ENCODE measurements at regions of chr7 and their contacts with region 1.

Region 1: DNA sequence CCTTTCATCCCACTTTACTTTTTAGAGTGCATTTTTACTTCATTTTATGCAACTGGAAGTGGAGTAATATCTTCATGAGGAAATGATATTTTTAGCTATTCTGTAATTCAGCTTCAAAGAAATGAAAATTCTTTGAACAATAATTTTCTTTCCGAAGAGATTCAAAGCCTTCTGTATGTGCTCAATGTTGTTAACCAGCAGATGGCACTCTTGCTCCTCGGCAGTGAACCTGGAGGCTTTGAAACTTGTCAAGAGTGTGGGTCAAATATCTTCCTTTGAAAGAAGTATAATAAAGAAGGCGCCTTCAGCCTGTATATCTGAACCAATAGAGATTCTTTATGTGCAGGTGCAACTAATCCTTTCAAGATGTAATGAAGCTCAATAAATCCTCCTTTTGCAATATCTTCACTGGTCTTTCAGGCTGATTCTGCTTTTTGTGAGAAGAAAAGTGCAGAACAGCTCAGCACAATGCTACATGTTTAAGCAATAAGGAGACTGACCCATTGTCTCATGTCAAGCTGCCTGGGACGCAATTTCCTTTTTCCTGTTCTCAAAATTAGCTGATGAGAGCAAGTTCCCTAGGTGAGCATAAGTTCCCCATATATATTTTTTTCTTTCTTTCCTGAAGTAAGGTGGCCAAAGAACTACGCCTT is 258.4 kb downstream of the SEMA3A start:
- DNase-seq: peak; percentile 57
- H3K4me3 ChIP-seq: no peak overlapping the region
- H3K27ac ChIP-seq: no peak overlapping the region
- H3K4me1 ChIP-seq: no peaks in the 10 kb centered on the region
- H3K27me3 ChIP-seq: no peaks in the 10 kb centered on the region
- CTCF ChIP-seq: peak; percentile 100
- EP300 ChIP-seq: no peak
- RAD21 ChIP-seq: peak; percentile 99

Region 2: GRCh38 chr7:83947260-83947659 is 11.1 kb after region 1 on chr7:
- CTCF ChIA-PET with region 1: interaction called, 96 read pairs
- POLR2A ChIA-PET with region 1: no interaction called
- DNase-seq: peak; percentile 38
- H3K4me3 ChIP-seq: no peak overlapping the region
- H3K27ac ChIP-seq: no peak overlapping the region
- H3K4me1 ChIP-seq: no peaks in the 10 kb centered on the region
- H3K27me3 ChIP-seq: no peaks in the 10 kb centered on the region
- CTCF ChIP-seq: peak; percentile 61
- EP300 ChIP-seq: no peak
- RAD21 ChIP-seq: peak; percentile 51

Region 3: DNA sequence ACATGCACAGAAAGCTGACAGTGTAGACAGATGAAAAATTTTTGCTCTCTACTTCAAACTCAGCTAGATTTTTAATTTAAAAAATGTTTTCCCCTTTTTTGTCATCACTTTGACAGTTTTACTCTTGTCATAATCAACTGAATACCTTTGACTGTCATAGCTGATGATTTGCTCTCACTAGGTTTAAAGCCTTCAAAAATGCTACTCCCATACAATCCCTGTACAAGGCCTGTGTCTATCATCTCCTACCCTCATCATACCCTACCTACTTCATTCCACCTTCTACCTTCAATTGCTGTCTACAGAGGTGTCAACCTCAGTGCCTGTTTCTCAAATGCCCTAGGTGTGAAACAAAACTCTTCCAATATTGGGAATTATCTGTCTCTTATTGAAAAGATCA is 28.1 kb after region 1 on chr7:
- CTCF ChIA-PET with region 1: interaction called, 63 read pairs
- POLR2A ChIA-PET with region 1: no interaction called
- DNase-seq: no peak
- H3K4me3 ChIP-seq: no peak overlapping the region
- H3K27ac ChIP-seq: no peak overlapping the region
- H3K4me1 ChIP-seq: peaks cover 0 to 7% of the 10 kb centered on the region in 2 experiments; a peak in 1 of 4 replicates
- H3K27me3 ChIP-seq: no peaks in the 10 kb centered on the region
- CTCF ChIP-seq: no peak
- EP300 ChIP-seq: no peak
- RAD21 ChIP-seq: no peak

Region 4: DNA sequence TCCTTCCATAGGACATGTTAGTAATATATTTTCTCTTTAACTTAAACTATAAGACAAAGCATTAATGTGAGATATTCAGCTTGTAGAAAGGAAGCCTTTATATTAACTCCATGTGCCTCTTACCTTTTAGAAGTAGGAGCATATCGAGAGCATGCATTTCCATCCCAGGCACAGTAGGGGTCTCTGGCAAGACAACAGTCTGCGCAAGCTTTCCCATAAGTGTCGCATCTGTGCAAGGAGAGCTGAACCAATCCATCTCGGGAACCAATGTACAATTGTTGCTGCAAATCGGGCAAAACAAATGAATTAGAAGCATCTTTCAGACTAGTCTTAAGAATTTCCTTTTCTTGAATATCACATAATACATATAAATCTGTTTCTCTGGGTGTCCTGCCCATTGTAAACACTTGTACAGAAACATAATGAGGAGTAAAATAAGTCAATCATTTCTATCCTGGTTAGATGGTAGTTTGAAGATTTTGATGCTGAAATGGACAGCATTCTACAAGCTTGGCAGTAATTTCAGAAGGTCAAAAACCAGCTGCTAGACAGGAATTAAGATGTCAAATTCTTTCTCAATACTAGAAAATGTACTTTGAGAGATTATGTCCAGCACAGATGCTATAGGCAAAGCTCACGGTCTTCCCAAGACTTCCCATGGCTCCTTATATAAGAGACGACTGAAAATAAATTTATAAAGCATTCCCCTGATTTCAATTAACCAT is 1078.9 kb after region 1 on chr7:
- CTCF ChIA-PET with region 1: interaction called, 268 read pairs
- POLR2A ChIA-PET with region 1: no interaction called
- DNase-seq: no peak
- H3K4me3 ChIP-seq: no peak overlapping the region
- H3K27ac ChIP-seq: no peak overlapping the region
- H3K4me1 ChIP-seq: no peaks in the 10 kb centered on the region; a peak in 2 of 4 replicates
- H3K27me3 ChIP-seq: no peaks in the 10 kb centered on the region
- CTCF ChIP-seq: 0 out of 2 replicates have a peak, but pooled peaks have one; percentile 15
- EP300 ChIP-seq: no peak
- RAD21 ChIP-seq: no peak

Measured in SK-N-SH (cell line).